Heart right ventricle (tissue), 16 donors: ENCODE measurements at regions of chr6 and their contacts with region 1.

Region 1: DNA sequence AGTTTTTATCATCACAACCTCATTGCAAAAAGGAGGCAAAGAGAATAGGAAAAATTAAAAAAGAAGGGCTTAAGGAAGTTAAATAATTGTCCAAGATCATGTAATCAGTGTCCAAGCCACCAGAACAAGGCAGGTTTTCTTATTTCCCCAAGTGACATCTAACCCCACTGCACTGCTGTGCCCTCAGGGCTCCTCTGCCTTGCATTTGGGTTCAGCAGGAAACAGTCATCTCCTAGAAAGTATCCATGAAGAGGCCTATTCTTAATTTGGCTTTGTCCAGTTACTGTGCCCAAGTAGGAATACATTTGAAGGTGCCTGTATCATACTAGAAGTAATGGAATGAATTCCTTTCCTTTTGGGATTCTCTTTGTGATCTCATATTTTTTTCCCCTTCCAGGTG is 10.5 kb downstream of the TMEM14A start:
- DNase-seq: no peak
- ATAC-seq: no peak
- H3K4me3 ChIP-seq: no peak overlapping the region
- H3K27ac ChIP-seq: no peak overlapping the region
- H3K4me1 ChIP-seq: no peaks in the 10 kb centered on the region
- H3K27me3 ChIP-seq: peaks cover 0 to 37% (median 0%) of the 10 kb centered on the region in 7 donors
- CTCF ChIP-seq: no peak

Region 2: DNA sequence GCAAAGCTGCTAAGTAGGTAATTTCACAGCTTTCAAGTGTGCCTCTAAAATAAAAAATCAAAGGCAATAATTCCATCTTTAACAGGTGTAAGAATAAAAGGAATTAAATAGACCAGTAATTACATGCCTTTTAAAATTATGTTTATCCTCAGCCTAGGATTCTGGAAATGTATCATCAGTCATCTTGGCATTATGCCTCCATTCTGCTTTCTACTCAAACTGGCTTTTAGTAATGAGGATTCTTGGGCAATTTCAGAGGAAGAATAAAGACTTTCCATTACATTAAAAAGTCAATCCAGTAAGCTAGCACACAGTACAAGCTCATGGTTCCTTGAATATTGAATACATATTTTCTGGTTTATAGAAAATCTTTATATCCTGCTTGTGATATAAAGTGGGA is 37.1 kb after region 1 on chr6:
- intact Hi-C with region 1: loop called in 1 of 10 experiments (anchors 1 kb)
- DNase-seq: no peak
- ATAC-seq: no peak
- H3K4me3 ChIP-seq: no peak overlapping the region
- H3K27ac ChIP-seq: no peak overlapping the region
- H3K4me1 ChIP-seq: no peaks in the 10 kb centered on the region
- H3K27me3 ChIP-seq: peaks cover 0 to 3% (median 0%) of the 10 kb centered on the region in 7 donors
- CTCF ChIP-seq: no peak